Tibial artery (tissue), 4 donors: ENCODE measurements at regions of chr2 and their contacts with region 1.

Region 1: DNA sequence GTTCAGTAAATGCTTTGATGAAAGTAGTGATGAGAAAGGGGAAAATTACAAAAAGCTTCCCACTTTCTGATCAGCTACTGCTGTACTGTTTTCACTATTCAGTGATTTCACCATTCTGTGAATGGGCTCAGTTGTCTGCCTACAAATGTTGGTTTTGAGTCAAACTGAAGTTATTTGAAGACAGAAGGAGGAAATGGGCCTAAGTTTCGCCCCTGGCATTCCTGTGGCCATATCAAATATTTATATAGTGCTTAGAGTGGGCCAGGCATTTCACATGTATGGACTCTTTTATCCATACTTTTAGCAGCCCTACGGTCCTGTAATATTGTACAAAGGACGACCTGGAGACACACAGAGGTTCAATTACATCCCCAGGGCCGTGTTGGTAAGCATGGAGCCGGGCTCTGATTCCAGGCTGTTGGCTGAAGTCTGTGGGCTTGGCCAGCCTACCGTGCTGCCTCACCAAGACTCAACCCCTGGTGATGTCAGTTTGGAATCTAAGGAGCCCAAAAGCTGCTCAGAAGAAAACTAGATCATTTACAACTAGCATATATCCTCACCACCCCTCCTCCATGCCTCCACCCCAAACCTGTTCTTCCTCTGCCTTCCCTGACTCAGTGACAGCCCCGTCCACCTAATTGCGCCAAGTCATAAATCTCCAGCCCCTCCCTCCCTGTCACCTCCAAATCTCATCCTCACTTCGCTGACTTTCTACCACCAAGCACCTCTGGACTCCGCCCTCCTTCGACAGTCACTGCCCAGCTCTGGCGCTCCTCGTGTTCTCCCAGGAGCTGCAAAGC is 10.1 kb upstream of the GRHL1 start:
- DNase-seq: no peak
- H3K4me3 ChIP-seq: no peak overlapping the region
- H3K27ac ChIP-seq: no peak overlapping the region
- H3K4me1 ChIP-seq: peaks cover 0 to 4% (median 0%) of the 10 kb centered on the region in 4 donors
- H3K27me3 ChIP-seq: peaks cover 0 to 10% of the 10 kb centered on the region in 2 donors
- CTCF ChIP-seq: no peak

Region 2: DNA sequence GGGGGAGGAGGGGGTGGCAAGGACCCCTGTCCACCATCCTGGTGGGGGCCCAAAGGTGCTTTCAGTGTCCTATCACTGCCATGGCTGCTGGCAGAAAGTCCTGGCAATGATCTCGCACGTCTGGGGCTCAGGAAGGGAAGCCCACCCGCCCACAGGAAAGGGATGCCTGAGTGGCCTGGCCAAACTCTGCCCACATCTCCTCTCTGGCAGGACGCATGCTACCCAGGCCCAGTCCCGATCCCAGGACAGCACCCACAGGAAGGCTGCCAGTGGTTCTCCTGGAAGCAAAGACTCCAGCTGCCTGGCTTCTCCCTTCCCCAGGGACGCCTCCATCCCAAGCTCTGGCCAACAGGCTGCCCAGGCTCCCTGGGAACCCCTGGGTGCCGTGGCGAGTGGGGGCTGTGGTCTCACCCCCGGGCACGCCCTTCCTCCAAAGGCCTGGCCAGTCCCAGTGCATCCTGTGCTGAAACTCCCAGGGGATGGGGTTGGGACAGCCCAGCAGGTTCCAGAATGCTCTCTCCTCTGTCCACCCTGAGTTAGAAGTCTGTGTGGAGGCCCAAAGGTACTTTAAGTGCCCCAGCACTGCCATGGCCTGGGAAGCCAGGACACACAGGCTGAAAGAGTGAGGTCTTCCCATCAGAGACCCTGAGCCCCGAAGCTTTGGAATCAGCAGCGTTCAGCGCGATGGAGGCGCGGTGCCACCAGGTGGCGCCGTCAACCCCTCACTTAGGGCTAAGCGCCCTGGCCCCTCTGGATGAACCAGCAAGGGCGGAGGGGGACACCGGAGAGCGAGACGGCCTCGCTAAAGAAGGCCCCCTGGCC is 127.9 kb before region 1 on chr2:
- intact Hi-C with region 1: loop called (anchors 10 kb)
- DNase-seq: peak; percentile 53 to 77
- H3K4me3 ChIP-seq: peak overlapping the region in 1 of 2 donors; percentile 3
- H3K27ac ChIP-seq: no peak overlapping the region
- H3K4me1 ChIP-seq: peaks cover 0 to 19% (median 12%) of the 10 kb centered on the region in 4 donors
- H3K27me3 ChIP-seq: peaks cover 0 to 9% of the 10 kb centered on the region in 2 donors
- CTCF ChIP-seq: peak; percentile 87 to 93

Region 3: DNA sequence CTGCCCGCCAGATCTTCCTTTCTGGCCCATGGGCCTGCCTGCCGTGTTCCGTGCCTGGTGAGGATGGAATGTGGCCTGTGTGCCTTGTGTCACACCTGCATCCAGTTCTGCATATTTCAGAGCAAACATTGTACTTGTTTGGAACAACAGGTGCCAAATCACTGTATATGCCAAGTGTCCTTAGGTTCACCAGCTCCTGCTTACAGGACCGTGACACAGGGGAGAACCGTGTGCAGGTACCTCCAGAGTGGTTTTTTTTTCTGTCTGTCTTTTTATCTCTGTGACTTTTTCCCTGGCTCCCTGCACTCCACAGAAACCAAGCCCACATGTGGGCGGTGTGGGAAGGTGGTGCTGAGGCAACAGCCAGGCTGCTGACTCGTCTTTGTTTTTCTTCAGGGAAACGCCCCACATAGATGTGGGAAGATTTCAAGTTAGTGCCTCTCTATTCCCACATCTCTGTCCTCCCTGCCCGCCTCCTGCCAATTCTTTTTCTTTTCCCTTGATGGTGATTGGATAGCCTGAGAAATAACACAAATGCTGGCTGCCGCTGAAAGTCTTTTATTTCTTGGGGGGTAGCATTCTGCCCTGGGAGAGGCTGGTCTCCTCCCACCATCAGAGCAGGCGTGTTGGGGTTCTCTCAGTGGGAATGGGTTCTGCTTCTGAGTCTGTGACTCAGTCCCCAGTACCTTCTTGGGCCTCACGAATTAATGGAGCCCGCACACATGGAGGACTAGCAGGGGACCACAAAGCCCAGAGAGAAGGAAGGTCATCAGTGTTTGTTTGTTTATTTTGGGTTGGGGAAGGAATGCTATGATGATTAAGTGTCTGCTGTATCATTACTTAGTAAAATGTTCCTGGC is 31.5 kb after region 1 on chr2:
- intact Hi-C with region 1: no loop called
- DNase-seq: peak in 1 of 2 donors; percentile 60
- H3K4me3 ChIP-seq: no peak overlapping the region
- H3K27ac ChIP-seq: peak overlapping the region in 1 of 2 donors; percentile 42
- H3K4me1 ChIP-seq: peaks cover 3 to 57% (median 24%) of the 10 kb centered on the region in 4 donors
- H3K27me3 ChIP-seq: no peaks in the 10 kb centered on the region
- CTCF ChIP-seq: no peak